ENCODE measurements at regions of chr5 and their contacts with region 1.

Region 1: GRCh38 chr5:103224118-103224893 is 34.3 kb upstream of the MACIR start:
- DNase-seq: peak; percentile 36
- H3K4me3 Mint-ChIP-seq: no peak overlapping the region
- H3K27ac Mint-ChIP-seq: no peak overlapping the region
- H3K4me1 Mint-ChIP-seq: no peaks in the 10 kb centered on the region
- H3K27me3 Mint-ChIP-seq: peaks cover 28% of the 10 kb centered on the region

Region 2: GRCh38 chr5:102536323-102536928 is 687.9 kb before region 1 on chr5:
- intact Hi-C with region 1: loop called (anchors 1 kb)
- DNase-seq: no peak
- H3K4me3 Mint-ChIP-seq: no peak overlapping the region
- H3K27ac Mint-ChIP-seq: no peak overlapping the region
- H3K4me1 Mint-ChIP-seq: no peaks in the 10 kb centered on the region
- H3K27me3 Mint-ChIP-seq: peaks cover 2% of the 10 kb centered on the region

Region 3: DNA sequence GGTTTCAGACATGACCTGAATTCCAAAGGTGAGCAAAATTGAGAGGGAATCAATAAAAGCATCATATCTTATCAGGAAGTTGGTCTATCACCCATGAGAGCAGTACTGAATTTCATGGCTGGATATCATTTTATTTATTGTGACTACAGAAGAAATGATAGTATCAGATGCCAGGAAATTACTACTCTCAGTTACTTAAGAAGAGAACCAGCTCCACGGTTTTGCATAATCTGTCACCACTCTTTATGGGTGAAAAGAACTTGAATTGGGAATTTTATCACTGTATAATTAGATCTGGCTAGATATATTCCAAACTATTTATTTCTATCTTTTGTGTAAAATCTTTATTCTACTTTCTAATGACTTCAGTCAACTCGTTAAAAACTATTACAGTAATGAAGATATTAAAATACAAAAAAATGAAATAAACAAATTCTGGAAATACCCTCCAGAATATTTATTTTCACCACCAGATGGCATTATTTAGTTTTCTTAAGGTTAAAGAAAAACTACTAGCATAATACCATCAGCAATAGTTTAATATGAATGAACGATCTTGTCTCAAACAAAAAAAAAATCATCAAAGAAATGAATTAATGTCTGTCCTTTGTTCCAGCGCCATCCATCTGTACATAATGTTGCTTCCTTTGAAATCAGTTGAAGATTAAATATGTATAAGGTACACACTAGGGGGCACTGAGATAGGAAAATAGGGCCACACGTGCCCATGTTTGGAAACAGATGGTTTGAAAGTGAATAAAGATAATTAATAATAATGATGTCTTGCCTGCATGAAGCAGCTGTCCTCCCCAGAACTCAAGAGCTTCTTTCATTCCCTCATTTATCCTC is 640.8 kb before region 1 on chr5:
- intact Hi-C with region 1: loop called (anchors 2 kb)
- DNase-seq: no peak
- H3K4me3 Mint-ChIP-seq: no peak overlapping the region
- H3K27ac Mint-ChIP-seq: no peak overlapping the region
- H3K4me1 Mint-ChIP-seq: peaks cover 1% of the 10 kb centered on the region
- H3K27me3 Mint-ChIP-seq: peaks cover 10% of the 10 kb centered on the region

Region 4: GRCh38 chr5:103280967-103281366 is 56.7 kb after region 1 on chr5:
- intact Hi-C with region 1: no loop called
- DNase-seq: no peak
- H3K4me3 Mint-ChIP-seq: no peak overlapping the region
- H3K27ac Mint-ChIP-seq: no peak overlapping the region
- H3K4me1 Mint-ChIP-seq: no peaks in the 10 kb centered on the region
- H3K27me3 Mint-ChIP-seq: no peaks in the 10 kb centered on the region

Region 5: GRCh38 chr5:103498211-103498610 is 273.9 kb after region 1 on chr5:
- intact Hi-C with region 1: no loop called
- DNase-seq: no peak
- H3K4me3 Mint-ChIP-seq: no peak overlapping the region
- H3K27ac Mint-ChIP-seq: no peak overlapping the region
- H3K4me1 Mint-ChIP-seq: no peaks in the 10 kb centered on the region
- H3K27me3 Mint-ChIP-seq: no peaks in the 10 kb centered on the region